Right ventricle myocardium superior (tissue), 1 donor: ENCODE measurements at regions of chr3 and their contacts with region 1.

Region 1: GRCh38 chr3:45938864-45939263 is 4.4 kb upstream of the CXCR6 start:
- DNase-seq: peak; percentile 84
- ATAC-seq: peak; percentile 89

Region 2: GRCh38 chr3:45479621-45480035 is 459.2 kb before region 1 on chr3:
- intact Hi-C with region 1: no loop called
- DNase-seq: no peak
- ATAC-seq: no peak

Region 3: GRCh38 chr3:46065294-46065721 is 126.4 kb after region 1 on chr3:
- intact Hi-C with region 1: no loop called
- DNase-seq: no peak
- ATAC-seq: peak; percentile 69

Region 4: GRCh38 chr3:46078712-46079400 is 140.0 kb after region 1 on chr3:
- intact Hi-C with region 1: loop called (anchors 2 kb)
- DNase-seq: peak; percentile 85
- ATAC-seq: peak; percentile 97